PC-3 (cell line): ENCODE measurements at regions of chr13 and their contacts with region 1.

Region 1: GRCh38 chr13:76903544-76904162 is 17.4 kb upstream of the KCTD12 start:
- DNase-seq: peak; percentile 79
- ATAC-seq: peak; percentile 64
- H3K4me3 ChIP-seq: no peak overlapping the region
- H3K27ac ChIP-seq: no peak overlapping the region
- H3K4me1 ChIP-seq: no peaks in the 10 kb centered on the region
- H3K27me3 ChIP-seq: peaks cover 7% of the 10 kb centered on the region; the same call in 1 of the 2 replicates
- CTCF ChIP-seq: peak; percentile 93

Region 2: DNA sequence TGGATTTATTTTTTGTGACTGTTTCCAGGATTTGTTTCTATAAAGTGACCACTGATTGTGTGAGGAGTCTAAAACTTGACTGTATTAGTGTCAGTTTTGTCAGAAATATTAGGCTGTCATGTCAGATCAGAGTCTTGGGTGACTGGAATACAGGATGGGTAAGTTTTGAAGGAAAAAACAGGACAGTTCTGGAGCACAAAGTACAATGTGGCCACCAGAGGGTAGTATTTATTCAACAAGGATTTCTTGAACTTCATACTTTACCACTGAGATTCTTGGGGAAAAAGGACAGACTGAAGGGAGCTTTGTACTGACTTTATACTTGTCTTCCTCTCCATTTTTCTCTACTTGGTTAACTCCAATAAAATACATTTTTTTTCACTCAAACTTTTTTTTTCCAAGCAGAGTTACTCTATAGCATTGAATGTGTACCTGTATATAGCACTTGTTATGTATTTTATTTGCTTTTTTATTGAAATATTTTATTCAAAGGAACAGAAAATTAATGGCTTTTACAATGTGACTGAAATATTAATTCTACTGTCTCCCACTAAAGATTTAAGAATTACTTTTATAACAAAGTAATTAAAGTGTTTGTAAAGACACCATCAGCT is 1216.4 kb before region 1 on chr13:
- CTCF ChIA-PET with region 1: no interaction called
- POLR2A ChIA-PET with region 1: no interaction called
- intact Hi-C with region 1: loop called (anchors 10 kb)
- DNase-seq: peak; percentile 73
- ATAC-seq: peak; percentile 8
- H3K4me3 ChIP-seq: no peak overlapping the region
- H3K27ac ChIP-seq: peak overlapping the region; percentile 100
- H3K4me1 ChIP-seq: peaks cover 45% of the 10 kb centered on the region
- H3K27me3 ChIP-seq: no peaks in the 10 kb centered on the region
- CTCF ChIP-seq: peak; percentile 67

Region 3: DNA sequence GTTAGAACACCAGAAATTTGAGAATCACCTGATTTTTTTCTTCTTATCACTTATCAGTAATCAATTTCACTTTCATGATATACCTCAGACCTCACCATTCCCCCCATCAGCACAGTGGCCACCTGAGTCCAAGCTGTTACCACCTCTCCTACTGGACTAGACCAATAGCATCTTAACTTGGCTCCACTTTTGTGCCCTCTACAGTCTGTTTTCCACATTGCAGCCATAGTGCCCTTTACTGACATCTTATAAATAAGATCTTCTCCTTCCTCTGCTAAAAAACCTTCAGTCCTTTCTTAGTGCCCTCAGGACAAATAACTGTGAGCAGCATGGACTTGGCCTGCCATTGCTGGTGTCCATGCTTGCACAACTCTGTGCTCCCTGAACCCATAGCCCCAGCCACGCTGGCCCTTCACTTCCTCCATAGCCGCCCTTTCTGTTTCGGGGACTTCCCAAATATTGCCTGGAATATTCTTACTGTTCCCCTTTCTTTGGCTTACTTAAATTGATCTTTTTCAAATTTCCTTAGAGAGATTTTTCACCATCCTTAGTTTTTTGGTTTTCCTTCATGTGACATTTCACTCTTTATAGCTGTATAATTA is 886.8 kb before region 1 on chr13:
- CTCF ChIA-PET with region 1: no interaction called
- POLR2A ChIA-PET with region 1: no interaction called
- intact Hi-C with region 1: loop called (anchors 10 kb)
- DNase-seq: peak; percentile 67
- ATAC-seq: peak; percentile 18; the same call in 1 of the 2 replicates
- H3K4me3 ChIP-seq: no peak overlapping the region
- H3K27ac ChIP-seq: no peak overlapping the region
- H3K4me1 ChIP-seq: peaks cover 47% of the 10 kb centered on the region
- H3K27me3 ChIP-seq: no peaks in the 10 kb centered on the region
- CTCF ChIP-seq: peak; percentile 64

Region 4: DNA sequence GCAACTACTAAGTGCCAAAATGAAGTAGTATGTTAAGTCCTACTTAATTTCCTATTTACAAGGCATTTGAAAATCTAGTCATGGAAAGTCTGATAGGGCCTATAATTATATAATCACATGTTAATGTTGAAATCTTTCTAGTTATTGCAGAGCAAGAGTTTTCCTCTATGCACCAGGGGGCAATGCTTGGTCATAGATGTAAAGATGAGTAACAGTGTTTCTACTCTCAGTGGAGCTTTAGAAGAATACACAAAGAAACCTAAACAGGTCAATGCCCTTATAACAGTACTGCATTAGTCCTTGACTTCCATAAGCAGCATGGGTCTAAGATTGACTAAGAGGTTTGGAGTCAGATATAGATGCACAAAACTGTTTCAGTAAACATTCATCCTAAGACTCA is 236.1 kb before region 1 on chr13:
- CTCF ChIA-PET with region 1: no interaction called
- POLR2A ChIA-PET with region 1: no interaction called
- intact Hi-C with region 1: loop called (anchors 1 kb)
- DNase-seq: peak; percentile 27
- ATAC-seq: peak; percentile 57
- H3K4me3 ChIP-seq: no peak overlapping the region
- H3K27ac ChIP-seq: no peak overlapping the region
- H3K4me1 ChIP-seq: no peaks in the 10 kb centered on the region
- H3K27me3 ChIP-seq: peaks cover 21% of the 10 kb centered on the region
- CTCF ChIP-seq: peak; percentile 53

Region 5: GRCh38 chr13:76965759-76966421 is 62.2 kb after region 1 on chr13:
- CTCF ChIA-PET with region 1: no interaction called
- POLR2A ChIA-PET with region 1: no interaction called
- intact Hi-C with region 1: no loop called
- DNase-seq: peak; percentile 18
- ATAC-seq: peak; percentile 31
- H3K4me3 ChIP-seq: no peak overlapping the region
- H3K27ac ChIP-seq: no peak overlapping the region
- H3K4me1 ChIP-seq: no peaks in the 10 kb centered on the region
- H3K27me3 ChIP-seq: no peaks in the 10 kb centered on the region
- CTCF ChIP-seq: no peak

Region 6: GRCh38 chr13:76980075-76980718 is 76.5 kb after region 1 on chr13:
- CTCF ChIA-PET with region 1: interaction called, 7 read pairs
- POLR2A ChIA-PET with region 1: no interaction called
- intact Hi-C with region 1: loop called (anchors 5 kb)
- DNase-seq: peak; percentile 71
- ATAC-seq: peak; percentile 99
- H3K4me3 ChIP-seq: peak overlapping the region; percentile 59
- H3K27ac ChIP-seq: no peak overlapping the region
- H3K4me1 ChIP-seq: no peaks in the 10 kb centered on the region
- H3K27me3 ChIP-seq: no peaks in the 10 kb centered on the region
- CTCF ChIP-seq: peak; percentile 84

Region 7: GRCh38 chr13:77113496-77113895 is 209.8 kb after region 1 on chr13:
- CTCF ChIA-PET with region 1: no interaction called
- POLR2A ChIA-PET with region 1: no interaction called
- intact Hi-C with region 1: no loop called
- DNase-seq: no peak
- ATAC-seq: no peak
- H3K4me3 ChIP-seq: no peak overlapping the region
- H3K27ac ChIP-seq: no peak overlapping the region
- H3K4me1 ChIP-seq: peaks cover 4% of the 10 kb centered on the region; the same call in 1 of the 2 replicates
- H3K27me3 ChIP-seq: no peaks in the 10 kb centered on the region
- CTCF ChIP-seq: no peak